Heart right ventricle (tissue), 16 donors: ENCODE measurements at regions of chr17 and their contacts with region 1.

Region 1: GRCh38 chr17:44465897-44466296 is 37.3 kb downstream of the GPATCH8 start:
- DNase-seq: no peak
- ATAC-seq: no peak
- H3K4me3 ChIP-seq: no peak overlapping the region
- H3K27ac ChIP-seq: no peak overlapping the region
- H3K4me1 ChIP-seq: peaks cover 0 to 34% (median 20%) of the 10 kb centered on the region in 9 donors
- H3K27me3 ChIP-seq: no peaks in the 10 kb centered on the region
- CTCF ChIP-seq: no peak

Region 2: DNA sequence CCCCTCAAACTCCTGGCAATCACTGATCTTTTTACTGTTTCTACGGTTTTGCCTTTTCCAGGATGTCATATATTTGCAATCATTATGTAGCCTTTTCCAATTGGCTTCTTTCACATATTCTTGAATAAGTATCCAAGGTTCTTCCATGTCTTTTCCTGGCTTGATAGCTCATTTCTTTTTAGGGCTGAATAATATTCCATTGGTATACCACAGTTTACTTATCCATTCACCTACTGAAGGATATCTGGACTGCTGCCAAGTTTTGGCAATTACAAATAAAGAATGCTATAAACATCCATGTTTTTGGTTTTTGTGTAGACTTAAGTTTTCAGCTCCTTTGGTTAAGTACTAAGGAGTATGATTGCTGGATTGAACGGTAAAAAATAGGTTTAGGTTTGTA is 21.3 kb after region 1 on chr17:
- intact Hi-C with region 1: loop called in 1 of 10 experiments (anchors 1 kb)
- DNase-seq: no peak
- ATAC-seq: no peak
- H3K4me3 ChIP-seq: no peak overlapping the region
- H3K27ac ChIP-seq: no peak overlapping the region
- H3K4me1 ChIP-seq: peaks cover 0 to 4% (median 0%) of the 10 kb centered on the region in 9 donors
- H3K27me3 ChIP-seq: no peaks in the 10 kb centered on the region
- CTCF ChIP-seq: no peak